ENCODE measurements at regions of chr5 and their contacts with region 1.

Region 1: GRCh38 chr5:148443998-148444397 is 60.2 kb downstream of the FBXO38 start:
- DNase-seq: peak in 1 of 3 donors; percentile 80
- ATAC-seq: peak; percentile 83
- H3K4me3 ChIP-seq: no peak overlapping the region
- H3K4me1 ChIP-seq: no peaks in the 10 kb centered on the region
- CTCF ChIP-seq: peak; percentile 9

Region 2: GRCh38 chr5:149035372-149035790 is 591.4 kb after region 1 on chr5:
- intact Hi-C with region 1: loop called in 1 of 2 experiments (anchors 5 kb)
- DNase-seq: peak; percentile 62 to 85 (median 79)
- ATAC-seq: peak; percentile 87
- H3K4me3 ChIP-seq: no peak overlapping the region
- H3K4me1 ChIP-seq: no peaks in the 10 kb centered on the region
- CTCF ChIP-seq: peak; percentile 45